GM10248 (cell line): ENCODE measurements at regions of chr7 and their contacts with region 1.

Region 1: DNA sequence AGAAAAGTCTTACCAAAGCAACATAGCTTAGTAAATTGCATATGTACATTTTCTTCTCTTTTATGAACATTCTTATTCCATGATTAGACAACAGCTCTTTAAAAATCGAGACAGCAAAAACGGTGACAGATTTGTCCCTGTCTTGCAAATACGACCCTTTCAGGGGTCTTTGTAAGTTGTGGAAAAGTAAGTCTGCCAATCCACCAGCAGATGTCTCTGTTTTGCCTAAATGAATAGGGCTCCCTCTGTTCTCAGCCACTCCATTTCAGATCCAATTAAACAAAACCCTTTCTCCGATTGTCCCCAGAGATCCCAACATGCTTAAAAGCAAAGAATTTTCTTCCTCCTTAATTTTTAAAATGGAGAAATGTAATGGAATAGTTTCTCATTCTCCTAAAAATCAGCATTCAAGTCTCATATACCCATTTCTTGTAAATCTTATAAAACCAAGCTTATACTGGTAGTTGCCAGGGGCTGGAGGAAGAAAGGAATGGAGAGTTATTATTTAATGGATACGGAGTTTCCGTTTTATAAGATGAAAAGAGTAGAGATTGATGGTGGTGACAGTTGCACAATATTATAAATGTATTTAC is 61.0 kb upstream of the NFE2L3 start:
- DNase-seq: peak; percentile 54
- CTCF ChIP-seq: peak; percentile 47

Region 2: DNA sequence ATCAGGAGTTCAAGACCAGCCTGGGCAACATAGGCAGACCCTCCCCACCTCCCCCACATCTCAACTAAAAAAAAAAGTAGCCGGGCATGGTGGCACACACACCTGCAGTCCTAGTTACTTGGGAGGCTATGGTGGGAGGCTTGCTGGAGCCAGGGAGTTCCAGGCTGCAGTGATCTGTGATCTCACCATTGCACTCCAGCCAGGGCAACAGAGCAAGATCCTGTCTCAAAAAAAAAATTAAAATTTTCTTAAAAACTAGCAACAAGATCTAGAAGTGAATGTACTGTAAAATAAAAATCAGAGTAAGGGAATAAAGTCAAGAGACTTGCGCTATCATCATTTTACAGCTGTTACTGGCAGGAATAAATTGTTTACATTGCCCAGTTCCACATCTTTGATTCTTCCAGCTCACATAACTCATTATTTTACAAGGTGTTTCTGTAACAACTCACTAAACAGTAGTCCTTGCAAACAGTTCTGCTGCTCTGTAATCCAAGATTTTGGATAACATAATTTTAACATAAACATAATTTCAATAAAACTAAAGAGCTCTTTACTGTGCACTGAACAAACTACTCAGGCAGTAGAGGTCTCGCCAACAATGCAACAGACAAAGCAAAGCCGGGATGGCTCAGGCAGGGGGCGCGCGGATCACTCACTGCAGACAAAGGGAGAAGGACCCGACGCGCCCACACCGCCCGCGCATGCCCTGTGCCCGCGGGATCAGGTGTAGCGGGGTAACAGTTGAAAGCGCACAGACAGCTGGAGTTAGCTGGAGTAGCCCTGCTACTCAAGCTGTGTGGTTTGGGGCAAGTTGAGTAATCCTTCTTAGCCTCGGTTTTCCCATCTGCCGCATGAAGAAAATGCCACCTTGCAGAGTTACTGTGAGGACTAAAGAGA is 12.3 kb before region 1 on chr7:
- CTCF ChIA-PET with region 1: interaction called, 47 read pairs
- POLR2A ChIA-PET with region 1: no interaction called
- DNase-seq: peak; percentile 75
- CTCF ChIP-seq: peak; percentile 54

Region 3: GRCh38 chr7:26127411-26127810 is 36.4 kb after region 1 on chr7:
- CTCF ChIA-PET with region 1: interaction called, 15 read pairs
- POLR2A ChIA-PET with region 1: no interaction called
- DNase-seq: no peak
- CTCF ChIP-seq: no peak

Region 4: GRCh38 chr7:26200444-26201246 is 109.6 kb after region 1 on chr7 and contains the start of gene HNRNPA2B1:
- CTCF ChIA-PET with region 1: interaction called, 14 read pairs
- POLR2A ChIA-PET with region 1: no interaction called
- DNase-seq: peak; percentile 80
- CTCF ChIP-seq: no peak

Region 5: GRCh38 chr7:26267601-26268166 is 176.7 kb after region 1 on chr7:
- CTCF ChIA-PET with region 1: no interaction called
- POLR2A ChIA-PET with region 1: no interaction called
- DNase-seq: no peak
- CTCF ChIP-seq: no peak

Region 6: DNA sequence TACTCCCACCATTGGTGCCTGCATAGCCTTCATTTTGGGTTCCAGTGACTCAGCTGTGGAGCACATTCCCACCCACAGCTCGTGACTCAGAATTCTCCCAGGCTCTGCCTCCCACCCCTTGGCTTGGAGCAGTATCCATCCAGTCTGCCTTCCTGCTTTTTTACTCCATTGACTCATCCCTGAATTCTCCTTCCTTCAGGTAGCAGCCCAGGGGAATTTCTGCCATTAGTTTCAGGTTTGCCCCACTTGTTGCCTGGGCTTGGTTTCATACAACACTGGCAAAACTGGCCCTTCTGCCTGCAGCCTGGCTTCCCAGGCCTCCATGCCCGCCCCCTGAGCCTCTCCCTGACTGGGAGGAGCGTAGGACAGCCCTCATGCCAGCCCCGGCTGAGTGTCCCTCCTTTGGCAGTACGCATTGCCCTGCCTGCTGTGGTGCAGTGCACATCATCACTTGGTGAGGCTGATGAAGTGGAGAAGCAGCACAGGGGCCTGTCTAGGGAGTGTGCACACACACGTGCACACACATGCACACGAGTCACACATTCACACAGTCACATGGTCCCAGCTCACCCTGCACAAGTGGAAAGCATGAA is 255.7 kb after region 1 on chr7:
- CTCF ChIA-PET with region 1: interaction called, 12 read pairs
- POLR2A ChIA-PET with region 1: no interaction called
- DNase-seq: no peak
- CTCF ChIP-seq: no peak